ENCODE measurements at regions of chr2 and their contacts with region 1.

Region 1: DNA sequence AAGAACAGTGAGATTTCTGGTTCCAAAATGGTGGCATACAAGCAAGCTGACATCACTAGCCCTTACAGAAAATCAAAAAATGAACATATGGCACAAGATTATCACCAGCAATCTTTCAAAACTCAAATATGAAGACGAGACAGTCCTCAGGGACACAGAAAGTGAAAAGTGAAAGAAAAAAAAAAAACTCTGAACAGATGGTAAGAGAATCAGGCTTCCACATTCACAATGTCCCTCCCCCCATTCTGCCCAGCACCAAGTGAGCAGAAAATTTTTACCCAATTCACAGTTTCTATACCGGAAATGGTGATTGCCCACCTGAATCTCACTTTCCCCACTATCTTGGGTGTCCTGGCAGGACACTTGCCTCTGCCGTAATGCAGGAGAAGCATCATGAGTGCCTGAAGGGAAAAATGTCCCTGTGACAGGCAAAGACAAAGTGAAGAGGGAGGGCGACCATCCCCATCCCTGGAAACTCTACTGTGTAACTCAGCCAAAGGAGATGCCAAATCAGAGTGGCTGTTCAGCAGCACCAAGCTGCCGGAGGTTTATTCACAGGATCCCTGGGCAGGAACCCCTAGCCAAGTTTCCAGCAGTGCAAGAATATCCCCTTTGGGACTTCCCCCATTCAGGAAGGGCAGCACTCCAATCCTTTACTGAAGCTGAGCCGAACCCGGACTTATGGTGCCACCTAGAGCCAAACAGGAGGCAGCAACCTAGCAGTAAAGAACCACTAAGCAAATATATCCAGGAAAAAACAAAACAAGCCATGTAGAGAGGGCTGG is 312.2 kb downstream of the LRATD1 start:
- DNase-seq: peak; percentile 52
- H3K4me3 ChIP-seq: no peak overlapping the region
- H3K27ac ChIP-seq: no peak overlapping the region
- H3K4me1 ChIP-seq: no peaks in the 10 kb centered on the region
- H3K27me3 ChIP-seq: no peaks in the 10 kb centered on the region
- CTCF ChIP-seq: peak; percentile 51 to 69

Region 2: GRCh38 chr2:14385043-14385442 is 559.7 kb before region 1 on chr2:
- CTCF ChIA-PET with region 1: no interaction called
- dilution Hi-C with region 1: no loop called
- in situ Hi-C with region 1: no loop called
- intact Hi-C with region 1: loop called (anchors 1 kb)
- DNase-seq: peak; percentile 9
- H3K4me3 ChIP-seq: no peak overlapping the region
- H3K27ac ChIP-seq: no peak overlapping the region
- H3K4me1 ChIP-seq: no peaks in the 10 kb centered on the region
- H3K27me3 ChIP-seq: no peaks in the 10 kb centered on the region
- CTCF ChIP-seq: peak; percentile 14 to 27

Region 3: GRCh38 chr2:14428056-14428455 is 516.7 kb before region 1 on chr2:
- CTCF ChIA-PET with region 1: no interaction called
- dilution Hi-C with region 1: no loop called
- in situ Hi-C with region 1: no loop called
- intact Hi-C with region 1: loop called (anchors 5 kb)
- DNase-seq: peak; percentile 64
- H3K4me3 ChIP-seq: no peak overlapping the region
- H3K27ac ChIP-seq: no peak overlapping the region
- H3K4me1 ChIP-seq: no peaks in the 10 kb centered on the region
- H3K27me3 ChIP-seq: no peaks in the 10 kb centered on the region
- CTCF ChIP-seq: peak in 1 of 2 donors; percentile 53

Region 4: GRCh38 chr2:14831458-14831857 is 113.3 kb before region 1 on chr2:
- CTCF ChIA-PET with region 1: no interaction called
- dilution Hi-C with region 1: no loop called
- in situ Hi-C with region 1: no loop called
- intact Hi-C with region 1: no loop called
- DNase-seq: peak; percentile 11
- H3K4me3 ChIP-seq: no peak overlapping the region
- H3K27ac ChIP-seq: no peak overlapping the region
- H3K4me1 ChIP-seq: peaks cover 4% of the 10 kb centered on the region
- H3K27me3 ChIP-seq: no peaks in the 10 kb centered on the region
- CTCF ChIP-seq: peak; percentile 16 to 47

Measured in mammary epithelial cell (primary cell).